H1 (cell line): ENCODE measurements at regions of chr6 and their contacts with region 1.

Region 1: GRCh38 chr6:8170245-8170644 is 67.9 kb upstream of the EEF1E1 start:
- DNase-seq: no peak
- H3K4me3 ChIP-seq: no peak overlapping the region
- H3K27ac ChIP-seq: no peak overlapping the region
- H3K4me1 ChIP-seq: peaks cover 0 to 2% (median 0%) of the 10 kb centered on the region in 4 experiments; a peak in 2 of 7 replicates
- H3K27me3 ChIP-seq: no peaks in the 10 kb centered on the region
- CTCF ChIP-seq: peak; percentile 6 to 48 (median 28)
- EP300 ChIP-seq: no peak
- POLR2A ChIP-seq: no peak
- RAD21 ChIP-seq: peak; percentile 4 to 34; a peak in 2 of 4 replicates

Region 2: GRCh38 chr6:8180327-8181159 is 10.3 kb after region 1 on chr6:
- CTCF ChIA-PET with region 1: interaction called, 12 read pairs
- POLR2A ChIA-PET with region 1: no interaction called
- DNase-seq: no peak
- H3K4me3 ChIP-seq: peak overlapping the region in 1 of 4 experiments; percentile 46; a peak in 3 of 8 replicates
- H3K27ac ChIP-seq: no peak overlapping the region
- H3K4me1 ChIP-seq: peaks cover 3 to 10% (median 8%) of the 10 kb centered on the region in 4 experiments; a peak in 5 of 7 replicates
- H3K27me3 ChIP-seq: no peaks in the 10 kb centered on the region
- CTCF ChIP-seq: no peak
- EP300 ChIP-seq: no peak; a peak in 1 of 3 replicates
- POLR2A ChIP-seq: no peak
- RAD21 ChIP-seq: peak; percentile 6 to 20; a peak in 1 of 4 replicates

Region 3: GRCh38 chr6:8195040-8195713 is 24.9 kb after region 1 on chr6:
- CTCF ChIA-PET with region 1: interaction called, 21 read pairs
- POLR2A ChIA-PET with region 1: no interaction called
- DNase-seq: no peak
- H3K4me3 ChIP-seq: no peak overlapping the region
- H3K27ac ChIP-seq: no peak overlapping the region
- H3K4me1 ChIP-seq: peaks cover 1 to 11% (median 7%) of the 10 kb centered on the region in 4 experiments; a peak in 5 of 7 replicates
- H3K27me3 ChIP-seq: no peaks in the 10 kb centered on the region
- CTCF ChIP-seq: peak in 2 of 3 experiments; percentile 29 to 45; a peak in 2 of 4 replicates
- EP300 ChIP-seq: no peak
- POLR2A ChIP-seq: no peak
- RAD21 ChIP-seq: peak; percentile 39 to 56

Region 4: GRCh38 chr6:8229915-8230756 is 59.9 kb after region 1 on chr6:
- CTCF ChIA-PET with region 1: no interaction called
- POLR2A ChIA-PET with region 1: no interaction called
- DNase-seq: peak in 1 of 2 experiments; percentile 39
- H3K4me3 ChIP-seq: no peak overlapping the region
- H3K27ac ChIP-seq: no peak overlapping the region
- H3K4me1 ChIP-seq: peaks cover 0 to 4% (median 0%) of the 10 kb centered on the region in 4 experiments; a peak in 1 of 7 replicates
- H3K27me3 ChIP-seq: no peaks in the 10 kb centered on the region
- CTCF ChIP-seq: no peak
- EP300 ChIP-seq: no peak
- POLR2A ChIP-seq: no peak
- RAD21 ChIP-seq: no peak